Activated naive CD8-positive, alpha-beta T cell treated with anti-CD3 and anti-CD28 coated beads, Interleukin-2, amount 10 ng/mL, durations not matched to agents 7 days and 5 days (primary cell): ENCODE measurements at regions of chr9 and their contacts with region 1.

Region 1: DNA sequence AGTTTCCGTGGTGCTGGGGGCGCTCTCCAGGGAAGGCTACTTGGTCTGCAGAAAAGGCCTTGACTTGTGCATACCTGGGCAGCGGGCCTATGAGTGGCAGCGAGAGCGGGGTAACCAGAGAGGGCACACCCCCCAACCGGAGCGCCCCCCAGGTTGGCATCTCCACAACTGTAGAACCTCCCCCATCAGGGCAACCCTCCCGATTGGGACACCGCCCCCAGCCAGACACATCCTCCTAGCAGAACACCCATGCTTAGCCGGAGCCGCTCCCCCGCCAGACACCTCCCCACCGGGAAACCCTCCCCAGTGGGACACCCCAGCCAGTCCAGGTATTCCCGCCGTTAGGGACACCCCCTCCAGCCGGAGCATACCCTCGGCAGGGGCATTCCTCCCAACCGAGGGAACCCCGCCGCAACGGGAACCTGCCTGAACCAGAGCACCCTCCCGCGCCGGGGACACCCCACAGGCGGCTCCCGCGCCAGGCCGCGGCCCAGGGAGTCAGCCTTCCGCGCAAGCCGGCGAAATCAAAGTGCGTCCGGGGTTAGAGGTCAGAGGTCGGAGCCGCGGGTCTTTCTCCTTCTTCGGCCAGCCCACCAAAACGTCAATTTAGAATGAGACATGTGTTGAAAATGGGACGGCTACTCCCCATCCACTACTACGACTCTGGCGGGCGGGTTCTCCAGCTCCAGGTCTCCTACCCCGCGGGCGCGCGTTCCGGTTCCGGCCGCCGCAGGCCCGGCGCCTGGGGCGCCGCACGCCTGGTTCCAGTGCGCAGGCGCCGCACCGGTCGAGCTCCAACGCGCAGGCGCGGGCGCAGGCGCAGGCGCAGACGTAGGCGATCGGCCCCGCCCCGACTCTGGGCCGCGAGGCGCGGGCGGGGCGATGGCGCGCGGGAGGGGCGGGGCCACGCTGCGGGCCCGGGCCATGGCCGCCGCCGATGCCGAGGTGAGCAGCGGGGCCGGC is at the start of gene EHMT1:
- DNase-seq: peak; percentile 99
- ATAC-seq: peak; percentile 72
- H3K4me3 Mint-ChIP-seq: peak within 1 kb of the TSS; percentile 95
- H3K27ac Mint-ChIP-seq: peak within 1 kb of the TSS; percentile 89
- H3K4me1 Mint-ChIP-seq: peaks cover 28% of the 10 kb centered on the region
- H3K27me3 Mint-ChIP-seq: no peaks in the 10 kb centered on the region
- total RNA-seq, gene EHMT1: 111 to 118 TPM

Region 2: GRCh38 chr9:137453643-137454081 is 164.7 kb before region 1 on chr9:
- POLR2A ChIA-PET with region 1: no interaction called
- DNase-seq: peak; percentile 39
- ATAC-seq: no peak
- H3K4me3 Mint-ChIP-seq: no peak overlapping the region
- H3K27ac Mint-ChIP-seq: no peak overlapping the region
- H3K4me1 Mint-ChIP-seq: peaks cover 15% of the 10 kb centered on the region
- H3K27me3 Mint-ChIP-seq: no peaks in the 10 kb centered on the region

Region 3: DNA sequence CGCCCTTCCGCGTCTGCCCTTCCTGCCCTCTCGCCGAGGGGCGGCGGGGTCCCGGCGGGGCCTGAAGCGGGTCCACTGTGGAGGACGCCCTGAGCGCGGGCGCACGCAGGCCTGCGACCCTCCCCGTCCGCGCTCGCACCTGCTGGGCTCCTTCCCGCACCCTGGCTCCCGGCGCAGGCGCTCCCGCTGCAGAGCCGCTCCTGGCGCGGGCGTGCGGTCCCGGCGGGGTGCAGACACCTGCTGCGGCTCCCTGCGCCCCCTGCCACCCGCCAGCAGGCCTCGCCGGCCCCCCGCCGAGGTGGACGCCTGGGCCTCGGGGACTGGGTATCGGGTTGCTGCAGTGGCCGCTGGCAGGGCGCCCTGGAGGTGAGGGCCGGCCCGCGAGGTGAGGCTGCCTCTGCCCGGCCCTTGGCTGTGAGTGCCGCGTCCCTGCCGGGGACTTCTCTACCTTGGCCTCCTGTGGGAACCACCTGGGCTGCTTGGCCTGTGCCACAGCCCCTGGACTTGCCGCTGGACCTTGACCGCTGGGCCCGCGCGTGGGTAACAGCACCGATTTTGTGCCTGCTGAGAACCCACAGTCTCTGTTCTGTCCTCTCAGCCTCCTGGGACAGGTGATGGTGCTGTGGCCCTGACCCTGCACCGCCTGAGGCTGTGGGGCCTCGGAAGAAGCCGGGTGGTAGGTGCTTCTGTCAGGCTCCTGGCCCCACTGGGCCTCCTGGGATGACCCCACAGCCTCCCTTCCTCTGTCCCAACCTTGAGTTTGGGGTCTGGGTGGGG is 12.2 kb before region 1 on chr9:
- POLR2A ChIA-PET with region 1: interaction called, 16 read pairs
- DNase-seq: no peak
- ATAC-seq: peak; percentile 7
- H3K4me3 Mint-ChIP-seq: peak overlapping the region; percentile 83
- H3K27ac Mint-ChIP-seq: peak overlapping the region; percentile 23
- H3K4me1 Mint-ChIP-seq: peaks cover 16% of the 10 kb centered on the region
- H3K27me3 Mint-ChIP-seq: peaks cover 2% of the 10 kb centered on the region

Region 4: DNA sequence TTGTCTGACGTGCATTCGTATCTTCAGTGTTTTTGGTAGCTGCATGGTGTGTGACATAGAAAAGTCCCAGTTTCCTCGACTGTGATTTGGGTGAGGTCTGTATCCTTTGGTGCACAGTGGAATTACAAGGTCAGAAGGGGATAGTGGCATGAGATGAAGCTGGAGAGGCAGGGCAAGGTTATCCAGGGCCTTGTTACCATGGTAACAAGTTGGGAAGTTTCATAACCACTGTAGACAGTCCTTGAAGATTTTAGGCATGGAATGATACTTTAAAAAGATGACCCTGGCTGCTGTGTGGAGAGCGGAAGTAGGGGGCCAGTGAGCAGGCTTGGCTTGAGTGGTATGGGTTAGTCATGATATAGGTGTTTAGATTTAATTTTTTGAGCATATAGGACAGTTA is 12.3 kb after region 1 on chr9:
- POLR2A ChIA-PET with region 1: interaction called, 36 read pairs
- DNase-seq: no peak
- ATAC-seq: no peak
- H3K4me3 Mint-ChIP-seq: peak overlapping the region; percentile 28
- H3K27ac Mint-ChIP-seq: peak overlapping the region; percentile 49
- H3K4me1 Mint-ChIP-seq: peaks cover 30% of the 10 kb centered on the region
- H3K27me3 Mint-ChIP-seq: no peaks in the 10 kb centered on the region